ENCODE measurements at regions of chr19 and their contacts with region 1.

Region 1: GRCh38 chr19:58154679-58155648 is 4.4 kb upstream of the ZNF329 start:
- DNase-seq: peak; percentile 94 to 100 (median 99)
- ATAC-seq: peak; percentile 85
- H3K4me3 ChIP-seq: peak overlapping the region; percentile 69 to 99
- H3K4me3 Mint-ChIP-seq: peak overlapping the region; percentile 87
- H3K27ac ChIP-seq: peak overlapping the region; percentile 76 to 94
- H3K27ac Mint-ChIP-seq: peak overlapping the region; percentile 82
- H3K4me1 ChIP-seq: peaks cover 17% of the 10 kb centered on the region
- H3K4me1 Mint-ChIP-seq: peaks cover 25% of the 10 kb centered on the region
- H3K27me3 ChIP-seq: no peaks in the 10 kb centered on the region
- H3K27me3 Mint-ChIP-seq: no peaks in the 10 kb centered on the region
- CTCF ChIP-seq: peak; percentile 98

Region 2: GRCh38 chr19:56314562-56315077 is 1840.3 kb before region 1 on chr19 and contains the start of gene ZSCAN5A:
- CTCF ChIA-PET with region 1: no interaction called
- POLR2A ChIA-PET with region 1: no interaction called
- intact Hi-C with region 1: loop called in 1 of 2 experiments (anchors 2 kb)
- DNase-seq: peak; percentile 93 to 99 (median 98)
- ATAC-seq: peak; percentile 73
- H3K4me3 ChIP-seq: peak within 1 kb of the TSS; percentile 87 to 88
- H3K4me3 Mint-ChIP-seq: peak within 1 kb of the TSS; percentile 95
- H3K27ac ChIP-seq: peak within 1 kb of the TSS; percentile 96 to 100
- H3K27ac Mint-ChIP-seq: peak within 1 kb of the TSS; percentile 99
- H3K4me1 ChIP-seq: peaks cover 21% of the 10 kb centered on the region
- H3K4me1 Mint-ChIP-seq: peaks cover 26% of the 10 kb centered on the region
- H3K27me3 ChIP-seq: no peaks in the 10 kb centered on the region
- H3K27me3 Mint-ChIP-seq: no peaks in the 10 kb centered on the region
- CTCF ChIP-seq: no peak
- total RNA-seq, gene ZSCAN5A: 4.6 to 7.0 TPM

Region 3: DNA sequence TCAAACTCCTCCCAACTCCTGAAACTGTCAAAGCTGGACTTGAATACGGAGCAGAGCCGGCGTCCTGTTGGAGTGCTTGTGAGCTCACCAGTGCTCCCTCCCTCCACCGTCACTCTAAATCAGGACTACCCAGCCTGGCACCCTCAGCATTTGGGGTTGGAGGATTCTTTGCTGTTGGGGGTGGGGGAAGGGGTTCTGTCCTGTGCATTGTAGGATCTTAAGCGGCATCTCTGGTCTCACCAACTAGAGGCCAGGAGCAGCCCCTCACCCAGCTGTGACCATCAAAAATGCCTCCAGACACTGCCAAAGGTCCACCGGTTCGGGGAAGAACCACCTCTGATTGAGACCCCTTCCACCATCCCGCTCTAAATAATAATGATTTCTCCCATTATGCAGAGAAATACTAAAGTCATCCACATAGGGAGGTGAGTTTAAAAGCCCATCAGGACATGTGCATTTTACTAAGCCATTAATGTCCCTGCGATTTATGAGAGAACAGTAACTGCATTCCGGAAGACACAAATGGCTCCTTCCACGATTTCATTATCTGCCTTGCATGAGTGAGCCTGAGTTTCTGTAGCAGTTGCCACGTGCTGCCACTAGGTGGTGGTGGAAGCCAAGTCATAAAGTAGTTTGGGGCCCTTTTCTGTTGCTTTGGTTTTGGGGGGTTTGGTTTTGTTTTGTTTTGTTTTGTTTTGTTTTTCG is 1051.2 kb before region 1 on chr19:
- CTCF ChIA-PET with region 1: no interaction called
- POLR2A ChIA-PET with region 1: no interaction called
- intact Hi-C with region 1: loop called in 1 of 2 experiments (anchors 1 kb)
- DNase-seq: peak; percentile 14 to 79 (median 59)
- ATAC-seq: peak; percentile 97
- H3K4me3 ChIP-seq: peak overlapping the region in 1 of 2 experiments; percentile 11
- H3K4me3 Mint-ChIP-seq: peak overlapping the region; percentile 70
- H3K27ac ChIP-seq: no peak overlapping the region
- H3K27ac Mint-ChIP-seq: no peak overlapping the region
- H3K4me1 ChIP-seq: peaks cover 4% of the 10 kb centered on the region
- H3K4me1 Mint-ChIP-seq: peaks cover 6% of the 10 kb centered on the region
- H3K27me3 ChIP-seq: peaks cover 0 to 4% of the 10 kb centered on the region in 2 experiments
- H3K27me3 Mint-ChIP-seq: peaks cover 26% of the 10 kb centered on the region
- CTCF ChIP-seq: peak; percentile 82

Region 4: GRCh38 chr19:57559404-57560025 is 595.4 kb before region 1 on chr19 and contains the start of gene ZNF550:
- CTCF ChIA-PET with region 1: no interaction called
- POLR2A ChIA-PET with region 1: no interaction called
- intact Hi-C with region 1: loop called in 1 of 2 experiments (anchors 1 kb)
- DNase-seq: peak; percentile 74 to 92 (median 88)
- ATAC-seq: peak; percentile 96
- H3K4me3 ChIP-seq: peak within 1 kb of the TSS; percentile 77 to 89
- H3K4me3 Mint-ChIP-seq: peak within 1 kb of the TSS; percentile 98
- H3K27ac ChIP-seq: peak within 1 kb of the TSS; percentile 64 to 70
- H3K27ac Mint-ChIP-seq: peak within 1 kb of the TSS; percentile 96
- H3K4me1 ChIP-seq: peaks cover 20% of the 10 kb centered on the region
- H3K4me1 Mint-ChIP-seq: peaks cover 32% of the 10 kb centered on the region
- H3K27me3 ChIP-seq: no peaks in the 10 kb centered on the region
- H3K27me3 Mint-ChIP-seq: no peaks in the 10 kb centered on the region
- CTCF ChIP-seq: no peak
- total RNA-seq, gene ZNF550: 15.4 to 17.6 TPM

Region 5: GRCh38 chr19:57682226-57682766 is 472.7 kb before region 1 on chr19:
- CTCF ChIA-PET with region 1: no interaction called
- POLR2A ChIA-PET with region 1: no interaction called
- intact Hi-C with region 1: loop called in 1 of 2 experiments (anchors 2 kb)
- DNase-seq: no peak
- ATAC-seq: no peak
- H3K4me3 ChIP-seq: peak overlapping the region; percentile 91 to 94
- H3K4me3 Mint-ChIP-seq: peak overlapping the region; percentile 98
- H3K27ac ChIP-seq: peak overlapping the region; percentile 69 to 71
- H3K27ac Mint-ChIP-seq: peak overlapping the region; percentile 97
- H3K4me1 ChIP-seq: peaks cover 19% of the 10 kb centered on the region
- H3K4me1 Mint-ChIP-seq: peaks cover 36% of the 10 kb centered on the region
- H3K27me3 ChIP-seq: peaks cover 0 to 2% of the 10 kb centered on the region in 2 experiments
- H3K27me3 Mint-ChIP-seq: peaks cover 7% of the 10 kb centered on the region
- CTCF ChIP-seq: no peak

Region 6: GRCh38 chr19:57888560-57889231 is 266.3 kb before region 1 on chr19 and contains the start of gene ZNF814:
- CTCF ChIA-PET with region 1: no interaction called
- POLR2A ChIA-PET with region 1: no interaction called
- intact Hi-C with region 1: loop called in 1 of 2 experiments (anchors 1 kb)
- DNase-seq: peak; percentile 66 to 87 (median 81)
- ATAC-seq: peak; percentile 93
- H3K4me3 ChIP-seq: peak within 1 kb of the TSS; percentile 73 to 83
- H3K4me3 Mint-ChIP-seq: peak within 1 kb of the TSS; percentile 93
- H3K27ac ChIP-seq: peak within 1 kb of the TSS; percentile 66 to 68
- H3K27ac Mint-ChIP-seq: peak within 1 kb of the TSS; percentile 87
- H3K4me1 ChIP-seq: peaks cover 3% of the 10 kb centered on the region
- H3K4me1 Mint-ChIP-seq: peaks cover 39% of the 10 kb centered on the region
- H3K27me3 ChIP-seq: no peaks in the 10 kb centered on the region
- H3K27me3 Mint-ChIP-seq: no peaks in the 10 kb centered on the region
- CTCF ChIP-seq: peak; percentile 19
- total RNA-seq, gene ZNF814: 43.9 to 48.2 TPM

Region 7: DNA sequence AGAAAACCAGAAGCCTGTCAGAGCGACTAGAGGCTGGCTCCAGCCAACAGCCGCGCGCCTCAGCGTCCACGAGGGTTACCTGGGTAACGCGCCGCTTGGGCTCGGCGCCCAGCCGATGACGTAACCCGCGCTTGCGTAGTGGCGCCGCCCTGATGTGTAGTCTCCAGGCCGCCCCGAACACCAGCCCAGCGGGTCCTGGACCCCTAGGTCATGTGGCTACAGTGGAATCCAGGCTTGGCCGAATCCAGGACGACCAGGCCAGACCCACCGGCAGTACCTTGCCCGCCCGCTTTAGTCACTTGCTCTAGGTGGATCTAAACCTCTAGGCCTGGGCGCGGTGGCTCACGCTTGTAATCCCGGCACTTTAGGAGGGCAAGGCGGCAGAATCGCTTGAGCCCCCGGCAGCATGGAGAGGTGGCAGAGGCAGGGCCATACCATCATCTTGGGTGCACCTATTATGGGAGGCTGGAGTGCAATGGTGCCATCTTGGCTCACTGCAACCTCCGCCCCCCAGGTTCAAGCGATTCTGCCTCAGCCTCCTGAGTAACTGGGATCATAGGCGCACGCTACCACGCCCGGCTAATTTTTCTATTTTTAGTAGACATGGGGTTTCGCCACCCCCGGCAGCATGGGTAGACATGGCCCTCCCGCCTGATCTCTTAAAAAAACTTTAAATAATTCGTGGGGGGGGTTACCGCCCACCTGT is 145.1 kb before region 1 on chr19:
- CTCF ChIA-PET with region 1: no interaction called
- POLR2A ChIA-PET with region 1: no interaction called
- intact Hi-C with region 1: no loop called
- DNase-seq: peak in 8 of 9 experiments; percentile 37 to 67 (median 58)
- ATAC-seq: peak; percentile 86
- H3K4me3 ChIP-seq: peak overlapping the region; percentile 26 to 46
- H3K4me3 Mint-ChIP-seq: peak overlapping the region; percentile 67
- H3K27ac ChIP-seq: peak overlapping the region in 1 of 2 experiments; percentile 43
- H3K27ac Mint-ChIP-seq: peak overlapping the region; percentile 18
- H3K4me1 ChIP-seq: no peaks in the 10 kb centered on the region
- H3K4me1 Mint-ChIP-seq: no peaks in the 10 kb centered on the region
- H3K27me3 ChIP-seq: no peaks in the 10 kb centered on the region
- H3K27me3 Mint-ChIP-seq: peaks cover 7% of the 10 kb centered on the region
- CTCF ChIP-seq: no peak

Region 8: DNA sequence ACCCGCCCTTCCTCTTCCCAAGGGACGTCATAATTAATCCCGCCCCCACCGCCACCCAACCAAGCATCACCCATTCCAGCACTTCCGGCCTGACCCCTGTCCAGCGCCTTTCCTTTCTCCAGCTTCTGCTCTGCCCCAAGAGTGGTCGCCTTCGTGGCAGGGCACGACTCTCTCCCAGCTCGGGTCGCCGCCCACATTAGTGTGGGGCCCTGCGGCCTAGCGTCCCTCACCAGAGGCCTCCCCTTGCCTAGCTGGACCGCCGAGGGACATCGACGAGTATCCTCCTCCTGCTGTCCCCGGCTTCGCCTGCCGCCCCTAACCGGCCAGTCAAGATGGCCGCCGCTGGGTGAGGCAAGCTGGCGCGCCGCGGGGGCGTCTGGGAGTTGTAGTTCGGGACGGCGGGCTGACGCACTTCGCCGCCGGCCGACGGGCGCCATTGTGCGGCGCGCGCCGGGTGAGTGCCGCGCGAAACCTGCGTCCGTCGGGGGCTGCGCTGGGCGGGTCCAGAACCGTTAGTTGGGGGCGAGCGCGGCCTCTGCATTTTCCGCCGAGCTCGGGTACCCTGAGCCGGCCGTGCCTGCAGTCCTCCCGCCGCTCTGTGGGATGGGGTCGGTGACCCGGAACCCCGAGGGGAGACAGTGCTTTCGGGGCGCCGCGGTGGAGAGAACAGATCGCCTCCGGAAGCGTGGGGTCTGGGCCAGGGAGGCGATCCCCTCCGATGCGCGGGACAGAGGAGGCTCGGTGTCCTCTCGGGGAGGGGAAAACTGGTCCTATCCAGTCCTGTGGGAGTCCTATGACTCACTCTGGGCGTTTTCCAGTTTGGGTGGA is 28.2 kb after region 1 on chr19 and contains the start of gene ZNF274:
- CTCF ChIA-PET with region 1: no interaction called
- POLR2A ChIA-PET with region 1: interaction called, 6 read pairs
- intact Hi-C with region 1: loop called in 1 of 2 experiments (anchors 1 kb)
- DNase-seq: peak; percentile 88 to 96 (median 94)
- ATAC-seq: peak; percentile 86
- H3K4me3 ChIP-seq: peak within 1 kb of the TSS; percentile 90 to 94
- H3K4me3 Mint-ChIP-seq: peak within 1 kb of the TSS; percentile 91
- H3K27ac ChIP-seq: peak within 1 kb of the TSS; percentile 99 to 100
- H3K27ac Mint-ChIP-seq: peak within 1 kb of the TSS; percentile 100
- H3K4me1 ChIP-seq: peaks cover 9% of the 10 kb centered on the region
- H3K4me1 Mint-ChIP-seq: peaks cover 22% of the 10 kb centered on the region
- H3K27me3 ChIP-seq: no peaks in the 10 kb centered on the region
- H3K27me3 Mint-ChIP-seq: no peaks in the 10 kb centered on the region
- CTCF ChIP-seq: no peak
- total RNA-seq, gene ZNF274: 52.7 to 58.9 TPM